Right ventricle myocardium inferior (tissue), 1 donor: ENCODE measurements at regions of chrX and their contacts with region 1.

Region 1: GRCh38 chrX:15448010-15448640 is 45.0 kb downstream of the PIR start:
- DNase-seq: no peak
- ATAC-seq: no peak

Region 2: GRCh38 chrX:15107367-15107988 is 340.6 kb before region 1 on chrX:
- intact Hi-C with region 1: no loop called
- DNase-seq: no peak
- ATAC-seq: no peak

Region 3: DNA sequence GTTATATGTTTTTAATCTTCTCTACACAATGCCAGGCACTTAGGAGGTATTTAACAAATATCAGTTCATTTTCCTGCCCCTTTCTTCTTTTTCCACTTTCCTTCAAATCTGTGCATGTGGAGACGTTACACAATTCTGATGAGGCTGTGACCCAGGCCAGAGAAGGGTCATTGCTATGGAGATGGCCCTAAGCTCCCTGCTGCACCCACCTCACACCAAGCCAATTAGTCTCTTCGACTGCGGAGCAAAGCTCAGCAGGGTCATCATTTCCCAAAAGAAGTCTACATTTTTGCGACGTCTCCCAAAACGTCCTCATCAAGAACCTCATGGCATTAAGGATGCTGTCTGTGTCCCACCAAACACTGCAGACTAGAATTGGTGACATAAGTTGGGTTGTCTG is 35.0 kb before region 1 on chrX:
- intact Hi-C with region 1: loop called (anchors 5 kb)
- DNase-seq: no peak
- ATAC-seq: no peak

Region 4: GRCh38 chrX:15564981-15565579 is 117.0 kb after region 1 on chrX:
- intact Hi-C with region 1: no loop called
- DNase-seq: peak; percentile 52
- ATAC-seq: peak; percentile 91

Region 5: GRCh38 chrX:15971696-15972095 is 523.6 kb after region 1 on chrX:
- intact Hi-C with region 1: no loop called
- DNase-seq: no peak
- ATAC-seq: no peak